ENCODE measurements at regions of chr2 and their contacts with region 1.

Region 1: GRCh38 chr2:159137511-159138241 is 148.8 kb downstream of the WDSUB1 start:
- DNase-seq: no peak
- ATAC-seq: no peak
- H3K4me3 ChIP-seq: no peak overlapping the region
- H3K27ac ChIP-seq: no peak overlapping the region
- H3K4me1 ChIP-seq: peaks cover 7 to 20% of the 10 kb centered on the region in 2 experiments
- H3K27me3 ChIP-seq: no peaks in the 10 kb centered on the region; a peak in 1 of 5 replicates
- CTCF ChIP-seq: no peak
- EP300 ChIP-seq: no peak
- POLR2A ChIP-seq: no peak
- RAD21 ChIP-seq: no peak

Region 2: GRCh38 chr2:158878003-158878402 is 259.7 kb before region 1 on chr2:
- CTCF ChIA-PET with region 1: no interaction called
- POLR2A ChIA-PET with region 1: no interaction called
- in situ Hi-C with region 1: no loop called
- intact Hi-C with region 1: no loop called
- DNase-seq: no peak
- ATAC-seq: no peak
- H3K4me3 ChIP-seq: no peak overlapping the region
- H3K27ac ChIP-seq: no peak overlapping the region
- H3K4me1 ChIP-seq: no peaks in the 10 kb centered on the region
- H3K27me3 ChIP-seq: peaks cover 12 to 32% of the 10 kb centered on the region in 2 experiments; a peak in 4 of 5 replicates
- CTCF ChIP-seq: no peak
- EP300 ChIP-seq: no peak
- POLR2A ChIP-seq: no peak
- RAD21 ChIP-seq: no peak

Region 3: DNA sequence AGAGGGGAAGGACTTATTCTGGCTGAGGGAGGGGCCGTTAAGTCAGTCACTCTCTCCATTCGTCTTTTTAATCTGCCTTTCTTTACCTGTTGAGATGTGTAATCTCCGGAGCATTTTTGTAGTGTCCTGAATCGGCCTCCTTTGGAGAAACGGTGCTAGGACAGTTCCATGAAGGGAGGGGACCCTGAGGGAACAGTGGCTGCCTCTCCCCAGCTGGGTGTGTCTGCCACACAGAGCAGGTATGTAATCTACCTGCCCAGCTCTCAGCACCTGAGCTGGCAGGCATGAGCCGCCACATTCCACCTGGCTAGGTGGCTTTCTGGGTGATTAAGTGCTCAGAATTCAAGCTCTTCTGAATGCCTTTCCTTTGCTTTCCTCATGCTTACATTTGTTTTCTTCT is 17.6 kb after region 1 on chr2:
- CTCF ChIA-PET with region 1: no interaction called
- POLR2A ChIA-PET with region 1: interaction called, 11 read pairs
- in situ Hi-C with region 1: no loop called
- intact Hi-C with region 1: no loop called
- DNase-seq: no peak
- ATAC-seq: no peak
- H3K4me3 ChIP-seq: no peak overlapping the region
- H3K27ac ChIP-seq: no peak overlapping the region
- H3K4me1 ChIP-seq: peaks cover 4 to 8% of the 10 kb centered on the region in 2 experiments; a peak in 2 of 5 replicates
- H3K27me3 ChIP-seq: peaks cover 0 to 36% of the 10 kb centered on the region in 2 experiments; a peak in 4 of 5 replicates
- CTCF ChIP-seq: no peak
- EP300 ChIP-seq: no peak
- POLR2A ChIP-seq: no peak
- RAD21 ChIP-seq: no peak

Measured in K562 (cell line).